GM23248 (cell line): ENCODE measurements at regions of chr6 and their contacts with region 1.

Region 1: GRCh38 chr6:81734085-81734484 is 18.4 kb downstream of the TENT5A start:
- DNase-seq: no peak
- H3K4me3 ChIP-seq: no peak overlapping the region
- H3K27ac ChIP-seq: no peak overlapping the region
- H3K4me1 ChIP-seq: peaks cover 8% of the 10 kb centered on the region
- H3K27me3 ChIP-seq: no peaks in the 10 kb centered on the region

Region 2: DNA sequence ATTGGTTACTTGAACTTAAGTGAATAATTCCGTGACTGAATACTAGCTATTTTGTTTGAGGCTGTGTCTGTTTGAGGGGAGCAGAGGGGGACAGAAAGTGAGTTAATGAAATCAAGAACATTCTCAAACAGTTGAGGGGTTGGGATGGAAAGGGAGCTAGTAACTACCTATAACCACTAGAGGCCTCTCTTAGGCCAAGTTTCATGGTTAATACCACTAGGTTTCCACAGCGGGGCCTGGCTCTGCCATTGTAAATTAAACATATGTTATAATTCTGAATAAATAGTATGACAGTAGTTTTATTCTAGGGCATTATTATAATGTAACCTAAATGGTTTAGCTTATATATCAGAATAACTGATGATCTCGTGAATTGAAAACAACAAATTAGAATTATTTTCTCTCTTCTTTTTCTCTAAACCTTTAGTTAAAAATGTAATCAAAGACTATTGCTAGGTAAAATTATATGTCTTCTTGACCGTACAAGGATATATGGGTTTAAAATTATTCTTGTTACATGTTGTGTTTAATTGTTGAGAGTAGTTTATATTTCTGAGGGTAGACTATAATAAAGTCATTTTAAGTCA is 1519.6 kb before region 1 on chr6:
- in situ Hi-C with region 1: loop called (anchors 25 kb)
- DNase-seq: peak; percentile 88
- H3K4me3 ChIP-seq: no peak overlapping the region
- H3K27ac ChIP-seq: peak overlapping the region; percentile 10; the same call in 1 of the 2 replicates
- H3K4me1 ChIP-seq: peaks cover 37% of the 10 kb centered on the region
- H3K27me3 ChIP-seq: no peaks in the 10 kb centered on the region

Region 3: GRCh38 chr6:81265092-81265491 is 469.0 kb before region 1 on chr6:
- in situ Hi-C with region 1: loop called (anchors 25 kb)
- DNase-seq: peak; percentile 87
- H3K4me3 ChIP-seq: peak overlapping the region; percentile 70
- H3K27ac ChIP-seq: peak overlapping the region; percentile 40
- H3K4me1 ChIP-seq: 0 out of 2 replicates have a peak, but pooled peaks cover 3% of the 10 kb centered on the region
- H3K27me3 ChIP-seq: no peaks in the 10 kb centered on the region

Region 4: DNA sequence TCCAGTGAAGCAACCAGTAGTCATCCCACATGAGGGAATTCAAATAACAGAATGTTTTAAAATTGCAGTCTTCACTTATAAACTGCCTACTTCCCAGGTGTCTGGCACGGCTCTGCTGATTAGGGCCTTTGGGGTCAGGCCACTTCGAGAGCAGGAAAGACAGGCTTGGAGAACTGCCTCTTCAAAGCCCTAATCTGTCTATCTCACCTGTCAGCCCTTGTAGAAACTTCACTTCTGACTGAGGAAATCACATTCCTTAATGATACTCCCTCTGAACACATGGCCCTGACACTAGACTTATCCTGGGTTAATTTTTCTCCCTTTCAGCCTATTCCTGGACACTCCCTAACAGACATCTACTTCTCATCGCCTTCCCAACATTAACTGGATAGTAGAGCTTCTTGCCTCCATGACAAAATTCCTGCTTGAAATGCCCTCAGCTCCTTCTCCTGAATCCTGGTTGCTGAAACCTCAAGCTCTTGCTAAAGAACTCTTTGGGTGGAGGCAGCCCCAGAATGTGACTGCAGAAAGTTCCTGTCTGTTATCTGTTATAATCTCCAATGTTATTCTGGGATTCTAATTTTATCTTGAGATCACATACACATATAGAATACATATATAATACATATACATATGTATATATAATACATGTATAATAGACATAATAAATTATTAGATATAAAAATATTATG is 440.0 kb before region 1 on chr6:
- in situ Hi-C with region 1: no loop called
- DNase-seq: no peak
- H3K4me3 ChIP-seq: no peak overlapping the region
- H3K27ac ChIP-seq: no peak overlapping the region
- H3K4me1 ChIP-seq: no peaks in the 10 kb centered on the region
- H3K27me3 ChIP-seq: no peaks in the 10 kb centered on the region

Region 5: DNA sequence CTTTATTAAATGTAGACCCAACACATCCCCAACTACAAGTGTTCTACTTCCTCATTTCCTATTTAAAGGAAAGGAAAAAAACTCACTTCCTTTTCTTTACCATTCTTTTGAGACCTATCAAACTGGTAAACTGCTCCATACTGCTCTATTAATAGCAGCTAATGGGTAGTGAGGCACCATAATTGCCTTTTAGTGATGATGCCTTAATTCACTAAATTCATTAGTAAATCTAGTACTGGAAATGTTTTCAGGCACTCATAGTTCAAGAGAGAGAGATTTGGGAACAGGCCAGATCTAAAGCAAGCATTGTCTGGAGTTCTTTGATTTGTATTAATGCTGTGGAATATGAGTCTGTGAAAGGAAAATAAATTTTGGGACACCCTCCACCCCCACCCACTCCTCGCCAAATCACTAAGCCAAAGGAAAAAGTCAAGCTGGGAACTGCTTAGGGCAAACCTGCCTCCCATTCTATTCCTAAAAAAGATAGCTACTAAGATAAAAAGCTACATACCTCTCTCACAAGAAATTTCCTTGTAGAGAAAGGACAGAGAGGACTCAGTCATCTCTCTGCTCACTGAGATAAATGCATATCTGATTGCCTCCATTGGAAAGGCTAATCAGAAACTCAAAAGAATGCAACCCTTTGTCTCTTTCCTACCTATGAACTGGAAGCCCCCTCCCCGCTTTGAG is 527.1 kb after region 1 on chr6:
- in situ Hi-C with region 1: no loop called
- DNase-seq: no peak
- H3K4me3 ChIP-seq: no peak overlapping the region
- H3K27ac ChIP-seq: no peak overlapping the region
- H3K4me1 ChIP-seq: peaks cover 29% of the 10 kb centered on the region
- H3K27me3 ChIP-seq: no peaks in the 10 kb centered on the region